Common myeloid progenitor, CD34-positive (primary cell): ENCODE measurements at regions of chr4 and their contacts with region 1.

Region 1: DNA sequence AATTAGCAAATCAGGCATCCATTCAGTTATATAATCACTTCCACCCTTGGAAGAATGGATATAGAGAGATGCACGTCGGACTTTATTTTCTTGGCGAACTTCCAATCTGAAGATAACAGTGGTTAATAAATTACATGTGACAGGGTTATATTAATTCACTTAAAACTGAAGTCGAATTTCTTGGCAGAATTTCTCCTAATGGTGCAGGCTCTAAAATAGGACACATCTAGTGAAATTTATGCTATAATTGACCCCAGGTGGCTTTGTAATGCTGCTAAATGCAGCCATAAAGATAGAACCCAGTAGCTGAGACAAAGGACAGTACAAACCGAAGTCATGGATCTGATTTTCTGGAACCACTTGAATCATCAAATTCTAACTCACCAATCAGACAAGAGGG is 20.8 kb upstream of the SLC10A4 start:
- DNase-seq: no peak
- H3K4me3 ChIP-seq: no peak overlapping the region
- H3K27ac ChIP-seq: no peak overlapping the region
- H3K4me1 ChIP-seq: no peaks in the 10 kb centered on the region
- H3K27me3 ChIP-seq: no peaks in the 10 kb centered on the region

Region 2: GRCh38 chr4:48445704-48446103 is 16.7 kb before region 1 on chr4:
- CTCF ChIA-PET with region 1: interaction called, 12 read pairs
- POLR2A ChIA-PET with region 1: no interaction called
- DNase-seq: peak; percentile 5 to 41 (median 41)
- H3K4me3 ChIP-seq: no peak overlapping the region
- H3K27ac ChIP-seq: no peak overlapping the region
- H3K4me1 ChIP-seq: peaks cover 0 to 2% (median 0%) of the 10 kb centered on the region in 4 experiments
- H3K27me3 ChIP-seq: no peaks in the 10 kb centered on the region